ENCODE measurements at regions of chr1 and their contacts with region 1.

Region 1: DNA sequence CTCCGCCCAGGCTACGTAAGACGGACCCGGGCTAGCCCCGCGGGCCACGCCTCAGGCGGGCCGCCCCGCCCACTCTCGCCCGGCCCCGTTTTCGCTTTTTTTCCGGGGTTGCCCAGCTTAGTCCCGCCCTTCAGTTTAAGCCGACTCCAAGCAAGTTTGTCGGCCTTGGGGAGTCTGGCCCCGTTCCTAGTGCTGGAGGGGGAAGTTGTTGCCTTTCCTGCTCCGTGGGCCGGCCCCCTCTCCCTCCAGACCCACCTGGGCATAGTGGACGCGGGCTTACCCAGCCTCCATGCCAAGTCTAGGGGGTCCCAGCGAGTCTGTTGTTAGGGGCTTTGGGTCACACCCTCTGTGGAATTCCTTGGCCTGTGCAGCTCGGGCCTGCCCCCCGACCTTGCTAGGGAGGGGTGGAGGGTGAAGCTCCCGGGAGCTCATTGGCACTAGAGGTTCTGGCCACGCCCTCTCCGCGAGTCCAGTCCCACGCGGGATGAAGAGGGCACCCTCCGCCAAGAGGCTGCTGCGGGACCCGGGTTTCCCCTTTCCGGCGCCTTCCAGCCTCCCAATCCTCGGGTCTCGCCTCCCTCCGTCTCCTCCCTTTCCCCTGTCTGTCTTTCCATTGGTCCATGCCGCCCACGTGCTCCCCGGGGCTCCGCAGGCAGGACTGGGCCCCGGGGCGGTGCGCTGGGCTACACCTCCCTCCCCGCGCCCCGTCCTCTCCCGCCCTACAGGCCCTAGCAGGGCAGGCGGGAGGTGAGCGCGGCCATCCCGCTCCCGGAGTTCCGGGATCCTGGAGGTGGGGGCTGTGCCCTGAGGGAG is 3.3 kb downstream of the RUSC1 start:
- DNase-seq: peak; percentile 95
- H3K4me3 ChIP-seq: peak overlapping the region; percentile 61 to 76 (median 70)
- H3K27ac ChIP-seq: peak overlapping the region; percentile 40
- H3K4me1 ChIP-seq: peaks cover 41% of the 10 kb centered on the region
- H3K27me3 ChIP-seq: no peaks in the 10 kb centered on the region
- CTCF ChIP-seq: no peak
- POLR2A ChIP-seq: peak; percentile 56

Region 2: DNA sequence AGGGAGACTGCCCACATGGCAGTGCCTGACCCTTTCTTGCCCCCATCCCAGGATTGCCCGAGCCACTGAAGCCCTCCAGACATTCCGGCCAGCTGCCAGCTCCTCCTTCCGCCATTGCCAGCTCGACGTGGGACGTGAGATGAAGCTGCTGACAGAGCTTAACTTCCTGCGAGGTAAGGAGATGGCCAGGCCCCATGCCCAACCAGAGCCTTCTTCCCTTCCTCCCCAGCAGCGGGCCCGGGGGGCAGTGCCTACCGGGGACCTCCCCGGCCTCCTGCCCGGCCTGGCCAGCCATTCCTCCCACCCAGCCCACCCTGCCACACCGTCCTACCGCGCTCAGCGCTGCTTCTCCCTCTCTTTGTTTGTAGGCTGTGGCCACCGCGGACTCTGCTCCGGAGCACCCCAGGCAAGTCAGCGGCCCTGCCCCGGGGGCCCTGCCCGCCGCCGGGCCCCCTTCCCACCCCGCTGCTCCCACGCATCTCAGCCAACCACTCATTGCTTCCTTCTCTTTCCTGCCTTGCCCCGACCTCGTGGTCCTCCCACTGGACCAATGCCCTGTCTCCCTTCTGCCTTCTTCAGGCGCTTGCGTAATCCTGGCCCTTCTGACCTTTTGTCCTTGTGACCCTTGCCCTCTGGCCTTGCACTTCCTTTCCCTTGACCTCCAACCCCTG is 145.4 kb before region 1 on chr1:
- CTCF ChIA-PET with region 1: no interaction called
- POLR2A ChIA-PET with region 1: no interaction called
- dilution Hi-C with region 1: no loop called
- intact Hi-C with region 1: no loop called
- DNase-seq: no peak
- H3K4me3 ChIP-seq: no peak overlapping the region
- H3K27ac ChIP-seq: no peak overlapping the region
- H3K4me1 ChIP-seq: peaks cover 3% of the 10 kb centered on the region
- H3K27me3 ChIP-seq: no peaks in the 10 kb centered on the region
- CTCF ChIP-seq: no peak
- POLR2A ChIP-seq: no peak

Region 3: DNA sequence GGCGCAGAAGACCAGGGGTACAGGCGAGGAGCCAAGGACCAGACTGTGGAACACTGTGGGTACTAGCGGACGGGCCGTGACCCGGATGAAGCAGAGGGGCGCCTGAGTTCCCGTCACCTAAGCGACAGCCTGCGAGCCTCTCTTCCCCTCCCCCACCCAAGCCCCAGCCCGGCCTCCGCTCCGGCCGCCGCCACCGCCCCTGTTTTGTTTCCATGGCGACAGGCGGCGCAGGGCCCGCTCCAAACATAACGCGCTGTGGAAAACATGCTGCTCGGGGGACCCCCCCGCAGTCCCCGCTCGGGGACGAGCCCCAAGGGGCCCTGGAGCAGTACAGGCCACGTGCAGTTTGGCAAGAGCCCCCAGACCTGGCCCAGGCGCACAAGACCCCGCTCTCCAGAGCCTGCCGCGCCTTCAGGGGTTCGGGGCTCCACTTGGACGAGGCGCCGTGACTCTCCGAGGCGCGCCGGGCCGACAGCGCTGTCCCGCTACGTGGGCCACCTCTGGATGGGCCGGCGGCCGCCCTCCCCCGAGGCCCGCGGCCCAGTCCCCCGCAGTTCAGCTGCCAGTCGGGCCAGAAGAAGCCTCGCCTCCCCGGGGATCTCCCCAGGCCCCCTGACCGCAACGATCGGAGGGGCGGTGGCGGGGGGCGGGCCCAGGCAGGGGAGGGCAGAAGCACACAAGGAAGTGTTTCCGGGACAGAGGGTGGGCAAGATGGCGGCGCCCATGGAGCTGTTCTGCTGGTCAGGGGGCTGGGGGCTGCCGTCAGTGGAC is 115.3 kb before region 1 on chr1 and contains the start of gene MTX1:
- CTCF ChIA-PET with region 1: interaction called, 12 read pairs
- POLR2A ChIA-PET with region 1: no interaction called
- dilution Hi-C with region 1: no loop called
- intact Hi-C with region 1: loop called (anchors 1 kb)
- DNase-seq: peak; percentile 83
- H3K4me3 ChIP-seq: peak within 1 kb of the TSS; percentile 30 to 92 (median 82)
- H3K27ac ChIP-seq: peak within 1 kb of the TSS; percentile 87
- H3K4me1 ChIP-seq: peaks cover 21% of the 10 kb centered on the region
- H3K27me3 ChIP-seq: no peaks in the 10 kb centered on the region
- CTCF ChIP-seq: no peak
- POLR2A ChIP-seq: peak; percentile 71
- total RNA-seq, gene MTX1: 49.1 and 53.0 TPM in 2 replicates

Region 4: GRCh38 chr1:155277070-155277895 is 46.7 kb before region 1 on chr1 and contains the start of gene HCN3:
- CTCF ChIA-PET with region 1: interaction called, 19 read pairs
- POLR2A ChIA-PET with region 1: interaction called, 12 read pairs
- dilution Hi-C with region 1: no loop called
- intact Hi-C with region 1: loop called (anchors 1 kb)
- DNase-seq: peak; percentile 97
- H3K4me3 ChIP-seq: peak within 1 kb of the TSS; percentile 15 to 68 (median 53)
- H3K27ac ChIP-seq: no peak within 1 kb of the TSS
- H3K4me1 ChIP-seq: peaks cover 15% of the 10 kb centered on the region
- H3K27me3 ChIP-seq: peaks cover 0 to 2% of the 10 kb centered on the region in 2 experiments
- CTCF ChIP-seq: peak; percentile 54 to 76
- POLR2A ChIP-seq: no peak
- total RNA-seq, gene HCN3: 1.8 and 3.3 TPM in 2 replicates

Region 5: GRCh38 chr1:155562581-155563376 is 238.8 kb after region 1 on chr1 and contains the start of gene ASH1L:
- CTCF ChIA-PET with region 1: no interaction called
- POLR2A ChIA-PET with region 1: interaction called, 5 read pairs
- dilution Hi-C with region 1: no loop called
- intact Hi-C with region 1: loop called (anchors 2 kb)
- DNase-seq: peak; percentile 95
- H3K4me3 ChIP-seq: peak within 1 kb of the TSS; percentile 63 to 92 (median 89)
- H3K27ac ChIP-seq: peak within 1 kb of the TSS; percentile 74
- H3K4me1 ChIP-seq: peaks cover 9% of the 10 kb centered on the region
- H3K27me3 ChIP-seq: no peaks in the 10 kb centered on the region
- CTCF ChIP-seq: no peak
- POLR2A ChIP-seq: peak; percentile 96
- total RNA-seq, gene ASH1L: 29.2 and 29.4 TPM in 2 replicates

Region 6: GRCh38 chr1:155648551-155649147 is 324.6 kb after region 1 on chr1:
- CTCF ChIA-PET with region 1: no interaction called
- POLR2A ChIA-PET with region 1: no interaction called
- dilution Hi-C with region 1: no loop called
- intact Hi-C with region 1: loop called (anchors 5 kb)
- DNase-seq: peak; percentile 87
- H3K4me3 ChIP-seq: no peak overlapping the region
- H3K27ac ChIP-seq: no peak overlapping the region
- H3K4me1 ChIP-seq: peaks cover 7% of the 10 kb centered on the region
- H3K27me3 ChIP-seq: no peaks in the 10 kb centered on the region
- CTCF ChIP-seq: peak; percentile 44 to 53
- POLR2A ChIP-seq: no peak

Measured in endothelial cell of umbilical vein (primary cell).